Panc1 (cell line): ENCODE measurements at regions of chr1 and their contacts with region 1.

Region 1: GRCh38 chr1:231553320-231553719 is 24.9 kb downstream of the TSNAX start:
- DNase-seq: no peak
- ATAC-seq: no peak
- H3K4me3 ChIP-seq: no peak overlapping the region
- H3K27ac ChIP-seq: no peak overlapping the region
- H3K4me1 ChIP-seq: no peaks in the 10 kb centered on the region
- H3K27me3 ChIP-seq: no peaks in the 10 kb centered on the region
- CTCF ChIP-seq: no peak

Region 2: DNA sequence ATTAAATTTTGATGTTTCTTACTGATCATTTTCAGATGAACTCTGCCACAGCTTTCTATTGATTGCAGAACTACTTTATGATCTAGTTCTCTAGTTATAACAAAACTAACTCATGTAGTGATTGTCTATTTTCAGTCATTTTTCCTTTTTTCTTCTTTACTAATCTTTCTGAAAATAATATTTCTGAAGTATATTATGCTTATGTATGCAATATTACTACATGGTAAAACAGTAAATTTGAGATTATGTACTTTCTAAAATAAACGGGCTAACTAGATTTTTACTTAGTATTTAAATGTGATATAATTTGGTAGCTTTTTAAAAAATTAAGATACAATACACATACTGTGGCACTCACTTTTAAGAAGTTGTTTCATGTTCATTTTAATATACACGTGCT is 17.2 kb before region 1 on chr1:
- CTCF ChIA-PET with region 1: no interaction called
- POLR2A ChIA-PET with region 1: interaction called, 12 read pairs
- in situ Hi-C with region 1: no loop called
- intact Hi-C with region 1: no loop called
- DNase-seq: no peak
- ATAC-seq: no peak
- H3K4me3 ChIP-seq: no peak overlapping the region
- H3K27ac ChIP-seq: no peak overlapping the region
- H3K4me1 ChIP-seq: no peaks in the 10 kb centered on the region
- H3K27me3 ChIP-seq: no peaks in the 10 kb centered on the region
- CTCF ChIP-seq: no peak

Region 3: DNA sequence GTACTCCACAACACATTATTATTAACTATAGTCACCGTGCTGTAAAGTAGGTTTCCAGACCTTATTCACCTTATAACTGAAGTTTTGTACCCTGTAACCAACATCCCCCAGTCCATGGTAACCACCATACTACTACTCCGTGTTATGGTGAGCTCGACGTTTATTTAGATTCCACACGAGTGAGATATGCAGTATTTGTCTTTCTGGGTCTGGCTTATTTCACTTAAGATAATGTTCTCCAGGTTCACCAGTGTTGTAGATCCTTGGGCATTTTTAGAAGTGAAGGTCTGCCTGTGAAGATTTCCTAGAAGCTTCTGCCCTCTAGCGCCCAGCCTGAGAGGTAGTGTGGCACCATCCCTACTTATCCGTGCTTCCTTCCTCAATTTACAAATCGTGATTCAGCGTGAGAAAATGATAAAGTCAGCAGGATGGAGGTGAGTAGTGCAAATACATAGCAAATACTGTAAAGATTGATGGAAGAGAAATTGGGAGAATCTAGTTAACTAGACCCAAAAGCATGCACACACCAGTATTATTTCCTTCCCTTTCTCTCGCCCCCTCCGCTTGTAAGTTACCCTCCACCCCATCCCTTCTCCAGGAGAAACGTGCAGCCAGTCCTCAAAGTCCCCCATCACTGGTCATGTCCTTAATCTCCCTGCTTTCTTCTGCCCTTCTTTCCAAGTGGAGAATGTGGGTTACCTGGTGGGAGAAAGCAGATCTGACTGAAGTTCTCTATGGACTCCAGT is 37.3 kb after region 1 on chr1:
- CTCF ChIA-PET with region 1: no interaction called
- POLR2A ChIA-PET with region 1: no interaction called
- in situ Hi-C with region 1: no loop called
- intact Hi-C with region 1: no loop called
- DNase-seq: peak; percentile 36
- ATAC-seq: peak; percentile 96
- H3K4me3 ChIP-seq: no peak overlapping the region
- H3K27ac ChIP-seq: no peak overlapping the region
- H3K4me1 ChIP-seq: no peaks in the 10 kb centered on the region
- H3K27me3 ChIP-seq: no peaks in the 10 kb centered on the region
- CTCF ChIP-seq: peak; percentile 86

Region 4: GRCh38 chr1:232287676-232288569 is 734.6 kb after region 1 on chr1:
- CTCF ChIA-PET with region 1: no interaction called
- POLR2A ChIA-PET with region 1: no interaction called
- in situ Hi-C with region 1: no loop called
- intact Hi-C with region 1: no loop called
- DNase-seq: no peak
- ATAC-seq: no peak
- H3K4me3 ChIP-seq: no peak overlapping the region
- H3K27ac ChIP-seq: no peak overlapping the region
- H3K4me1 ChIP-seq: no peaks in the 10 kb centered on the region
- H3K27me3 ChIP-seq: no peaks in the 10 kb centered on the region
- CTCF ChIP-seq: no peak